ENCODE measurements at regions of chr11 and their contacts with region 1.

Region 1: DNA sequence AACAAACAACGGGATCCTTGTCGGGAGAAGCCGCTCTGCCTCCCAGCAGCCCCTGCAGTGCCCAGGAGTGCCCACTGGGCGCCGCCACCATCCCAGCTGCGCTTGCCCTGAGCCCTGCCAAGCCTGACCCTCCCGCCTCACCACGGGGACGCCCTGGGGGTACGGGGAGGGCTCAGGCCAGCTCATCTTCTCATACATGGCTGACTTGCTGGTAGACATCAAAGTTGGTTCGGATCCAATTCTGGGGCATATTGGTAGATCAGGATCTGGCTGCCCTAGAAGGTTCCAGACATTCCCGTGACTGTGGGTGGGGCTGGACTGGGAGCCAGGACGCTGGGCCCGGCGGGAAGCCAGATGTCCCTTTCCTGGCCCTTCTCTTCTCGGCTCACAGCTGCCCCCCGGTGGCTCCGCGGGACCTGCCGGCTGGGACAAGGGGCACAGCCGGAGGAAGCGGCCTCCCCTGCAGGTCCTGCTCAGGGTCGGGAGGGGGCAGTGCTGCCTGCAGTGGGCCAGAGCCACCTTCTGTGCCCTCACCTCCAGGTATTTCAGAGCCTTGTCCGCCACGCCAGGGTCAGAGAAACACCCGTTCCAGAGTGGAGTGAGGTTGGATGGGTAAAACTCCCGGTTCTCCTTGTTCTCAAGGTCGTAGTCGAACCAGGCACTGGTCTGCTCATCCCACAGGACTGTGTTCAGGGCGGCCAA is 10.6 kb upstream of the TREH start:
- DNase-seq: peak; percentile 91
- ATAC-seq: peak; percentile 95
- H3K4me3 Mint-ChIP-seq: peak overlapping the region; percentile 59
- H3K27ac Mint-ChIP-seq: peak overlapping the region; percentile 80
- H3K4me1 Mint-ChIP-seq: peaks cover 57% of the 10 kb centered on the region
- H3K27me3 Mint-ChIP-seq: peaks cover 12% of the 10 kb centered on the region

Region 2: GRCh38 chr11:118592616-118593367 is 97.2 kb before region 1 on chr11:
- CTCF ChIA-PET with region 1: interaction called, 14 read pairs
- POLR2A ChIA-PET with region 1: no interaction called
- DNase-seq: no peak
- ATAC-seq: no peak
- H3K4me3 Mint-ChIP-seq: no peak overlapping the region
- H3K27ac Mint-ChIP-seq: no peak overlapping the region
- H3K4me1 Mint-ChIP-seq: peaks cover 23% of the 10 kb centered on the region
- H3K27me3 Mint-ChIP-seq: no peaks in the 10 kb centered on the region

Region 3: DNA sequence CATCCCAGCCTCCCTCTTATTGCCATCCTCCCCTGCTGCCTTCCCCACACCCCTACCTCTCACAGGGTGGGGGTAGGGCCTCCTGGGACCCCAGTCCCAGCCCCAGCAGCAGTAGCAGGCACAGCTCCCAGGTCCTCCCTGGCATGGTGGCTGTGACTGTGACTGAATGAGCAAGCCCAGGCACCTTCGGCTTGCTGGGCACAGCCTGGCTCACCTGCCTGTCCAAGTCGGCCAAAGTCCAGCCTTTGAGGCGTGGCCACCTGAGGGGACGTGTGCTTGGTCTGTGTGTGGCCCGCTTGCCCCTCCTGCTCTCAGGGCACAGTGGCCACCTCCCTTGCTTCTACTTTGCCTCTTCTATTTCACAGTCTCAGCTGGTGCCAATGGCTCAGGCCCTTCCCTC is 10.5 kb before region 1 on chr11 and contains the start of gene TREH:
- CTCF ChIA-PET with region 1: interaction called, 12 read pairs
- POLR2A ChIA-PET with region 1: no interaction called
- DNase-seq: no peak
- ATAC-seq: no peak
- H3K4me3 Mint-ChIP-seq: no peak within 1 kb of the TSS
- H3K27ac Mint-ChIP-seq: no peak within 1 kb of the TSS
- H3K4me1 Mint-ChIP-seq: no peaks in the 10 kb centered on the region
- H3K27me3 Mint-ChIP-seq: peaks cover 12% of the 10 kb centered on the region
- total RNA-seq, gene TREH: not detected

Region 4: DNA sequence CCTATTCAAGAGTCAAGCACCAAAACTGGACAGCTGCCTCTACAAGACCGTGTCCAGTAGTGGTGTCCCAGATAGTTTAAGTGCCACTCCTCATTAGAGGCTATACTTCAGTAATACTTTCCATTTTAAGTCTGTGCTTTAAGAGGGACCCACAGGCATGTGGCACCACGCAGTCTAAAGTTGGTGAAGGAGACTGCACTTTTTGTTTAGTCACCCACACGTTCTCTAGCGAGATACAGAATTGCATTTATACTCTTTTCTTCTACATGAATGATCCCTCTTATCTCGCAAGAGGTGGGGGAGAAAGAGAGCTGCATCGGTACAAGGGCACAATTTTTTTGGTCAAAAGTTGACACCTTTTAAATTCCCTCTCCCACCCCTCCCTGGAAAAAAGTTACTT is 59.4 kb after region 1 on chr11:
- CTCF ChIA-PET with region 1: interaction called, 15 read pairs
- POLR2A ChIA-PET with region 1: interaction called, 4 read pairs
- DNase-seq: no peak
- ATAC-seq: no peak
- H3K4me3 Mint-ChIP-seq: no peak overlapping the region
- H3K27ac Mint-ChIP-seq: no peak overlapping the region
- H3K4me1 Mint-ChIP-seq: no peaks in the 10 kb centered on the region
- H3K27me3 Mint-ChIP-seq: no peaks in the 10 kb centered on the region

Region 5: GRCh38 chr11:118766035-118766434 is 76.0 kb after region 1 on chr11:
- CTCF ChIA-PET with region 1: interaction called, 12 read pairs
- POLR2A ChIA-PET with region 1: no interaction called
- DNase-seq: no peak
- ATAC-seq: no peak
- H3K4me3 Mint-ChIP-seq: no peak overlapping the region
- H3K27ac Mint-ChIP-seq: no peak overlapping the region
- H3K4me1 Mint-ChIP-seq: peaks cover 17% of the 10 kb centered on the region
- H3K27me3 Mint-ChIP-seq: no peaks in the 10 kb centered on the region

Region 6: GRCh38 chr11:118791111-118791965 is 101.3 kb after region 1 on chr11 and contains the start of gene DDX6:
- CTCF ChIA-PET with region 1: interaction called, 33 read pairs
- POLR2A ChIA-PET with region 1: interaction called, 3 read pairs
- DNase-seq: peak; percentile 94
- ATAC-seq: peak; percentile 61
- H3K4me3 Mint-ChIP-seq: peak within 1 kb of the TSS; percentile 99
- H3K27ac Mint-ChIP-seq: peak within 1 kb of the TSS; percentile 100
- H3K4me1 Mint-ChIP-seq: peaks cover 16% of the 10 kb centered on the region
- H3K27me3 Mint-ChIP-seq: no peaks in the 10 kb centered on the region
- total RNA-seq, gene DDX6: 143 to 152 TPM

Region 7: GRCh38 chr11:118827118-118827517 is 137.1 kb after region 1 on chr11:
- CTCF ChIA-PET with region 1: no interaction called
- POLR2A ChIA-PET with region 1: no interaction called
- DNase-seq: no peak
- ATAC-seq: no peak
- H3K4me3 Mint-ChIP-seq: no peak overlapping the region
- H3K27ac Mint-ChIP-seq: no peak overlapping the region
- H3K4me1 Mint-ChIP-seq: peaks cover 2% of the 10 kb centered on the region
- H3K27me3 Mint-ChIP-seq: no peaks in the 10 kb centered on the region

Region 8: GRCh38 chr11:118928108-118928870 is 238.3 kb after region 1 on chr11:
- CTCF ChIA-PET with region 1: interaction called, 27 read pairs
- POLR2A ChIA-PET with region 1: no interaction called
- DNase-seq: peak; percentile 94
- ATAC-seq: peak; percentile 57
- H3K4me3 Mint-ChIP-seq: peak overlapping the region; percentile 98
- H3K27ac Mint-ChIP-seq: peak overlapping the region; percentile 99
- H3K4me1 Mint-ChIP-seq: peaks cover 53% of the 10 kb centered on the region
- H3K27me3 Mint-ChIP-seq: no peaks in the 10 kb centered on the region

Measured in activated CD8-positive, alpha-beta T cell treated with anti-CD3 and anti-CD28 coated beads, Interleukin-2, amount 10 ng/mL, durations not matched to agents 7 days and 5 days (primary cell).